Pancreas (tissue), 10 donors: ENCODE measurements at regions of chr1 and their contacts with region 1.

Region 1: DNA sequence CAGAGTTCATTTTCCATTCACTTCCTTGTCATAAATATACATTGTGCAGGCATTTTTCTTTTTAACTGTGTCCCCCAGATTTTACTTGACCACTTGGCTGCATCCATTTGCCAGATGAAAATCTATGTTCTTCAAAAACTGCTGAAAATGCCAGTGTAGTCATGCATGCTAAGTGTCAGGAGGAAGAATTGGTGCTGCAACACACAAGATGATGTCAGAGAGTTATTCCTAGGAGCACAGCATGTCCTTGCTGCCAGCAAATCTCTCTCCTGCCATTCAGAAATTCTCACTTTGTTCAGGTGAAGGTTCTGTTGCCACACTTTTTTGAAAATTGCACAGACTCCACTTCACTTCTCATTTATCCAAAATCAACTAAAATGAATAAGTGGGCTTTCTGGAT is 106.4 kb upstream of the MAGI3 start:
- DNase-seq: no peak
- ATAC-seq: peak in 3 of 4 donors; percentile 44 to 69 (median 58)
- H3K4me3 ChIP-seq: no peak overlapping the region
- H3K27ac ChIP-seq: no peak overlapping the region
- H3K4me1 ChIP-seq: peaks cover 0 to 10% (median 8%) of the 10 kb centered on the region in 3 donors
- H3K27me3 ChIP-seq: no peaks in the 10 kb centered on the region
- CTCF ChIP-seq: no peak

Region 2: GRCh38 chr1:112466078-112466660 is 817.7 kb before region 1 on chr1:
- intact Hi-C with region 1: no loop called
- DNase-seq: peak; percentile 90 to 97 (median 96)
- ATAC-seq: peak; percentile 96 to 98 (median 97)
- H3K4me3 ChIP-seq: peak overlapping the region in 2 of 4 donors; percentile 23 to 28
- H3K27ac ChIP-seq: peak overlapping the region in 2 of 4 donors; percentile 32 to 55
- H3K4me1 ChIP-seq: no peaks in the 10 kb centered on the region
- H3K27me3 ChIP-seq: no peaks in the 10 kb centered on the region
- CTCF ChIP-seq: peak; percentile 57 to 84 (median 67)

Region 3: GRCh38 chr1:113369040-113369439 is 85.1 kb after region 1 on chr1:
- intact Hi-C with region 1: loop called in 1 of 3 experiments (anchors 10 kb)
- DNase-seq: no peak
- ATAC-seq: no peak
- H3K4me3 ChIP-seq: no peak overlapping the region
- H3K27ac ChIP-seq: no peak overlapping the region
- H3K4me1 ChIP-seq: no peaks in the 10 kb centered on the region
- H3K27me3 ChIP-seq: no peaks in the 10 kb centered on the region
- CTCF ChIP-seq: no peak